ENCODE measurements at regions of chr1 and their contacts with region 1.

Region 1: GRCh38 chr1:201085916-201086735 is 26.1 kb downstream of the CACNA1S start:
- DNase-seq: peak; percentile 31
- H3K4me3 ChIP-seq: no peak overlapping the region
- H3K27ac ChIP-seq: no peak overlapping the region
- H3K4me1 ChIP-seq: no peaks in the 10 kb centered on the region
- H3K27me3 ChIP-seq: peaks cover 7% of the 10 kb centered on the region in 2 experiments
- CTCF ChIP-seq: peak; percentile 36 to 70
- POLR2A ChIP-seq: no peak

Region 2: GRCh38 chr1:201108614-201109013 is 22.5 kb after region 1 on chr1:
- CTCF ChIA-PET with region 1: interaction called, 54 read pairs
- POLR2A ChIA-PET with region 1: interaction called, 3 read pairs
- dilution Hi-C with region 1: no loop called
- intact Hi-C with region 1: no loop called
- DNase-seq: no peak
- H3K4me3 ChIP-seq: no peak overlapping the region
- H3K27ac ChIP-seq: no peak overlapping the region
- H3K4me1 ChIP-seq: no peaks in the 10 kb centered on the region
- H3K27me3 ChIP-seq: peaks cover 8 to 13% of the 10 kb centered on the region in 2 experiments
- CTCF ChIP-seq: no peak
- POLR2A ChIP-seq: no peak

Region 3: DNA sequence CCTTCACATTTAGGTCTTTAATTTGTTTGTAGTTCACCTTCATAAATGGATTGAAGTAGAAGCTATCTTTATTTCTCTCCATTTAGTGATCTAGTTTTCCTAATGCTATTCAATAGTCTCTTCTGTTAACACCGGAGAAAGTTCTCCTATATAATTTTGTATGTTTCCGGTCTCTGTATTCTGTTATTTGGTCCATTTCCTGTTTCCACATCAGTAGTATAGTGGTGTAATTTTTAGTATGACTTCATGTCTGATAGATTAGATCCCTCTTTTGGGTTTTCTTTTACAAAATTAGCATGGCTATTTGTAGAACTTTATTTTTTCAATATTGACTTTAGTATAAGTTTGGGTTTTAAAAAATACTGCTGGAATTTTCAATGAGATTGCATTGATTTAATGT is 155.6 kb after region 1 on chr1:
- CTCF ChIA-PET with region 1: no interaction called
- POLR2A ChIA-PET with region 1: no interaction called
- dilution Hi-C with region 1: no loop called
- intact Hi-C with region 1: no loop called
- DNase-seq: no peak
- H3K4me3 ChIP-seq: no peak overlapping the region
- H3K27ac ChIP-seq: no peak overlapping the region
- H3K4me1 ChIP-seq: peaks cover 3% of the 10 kb centered on the region
- H3K27me3 ChIP-seq: peaks cover 10 to 57% of the 10 kb centered on the region in 2 experiments
- CTCF ChIP-seq: no peak
- POLR2A ChIP-seq: no peak

Region 4: GRCh38 chr1:201320163-201320788 is 234.2 kb after region 1 on chr1:
- CTCF ChIA-PET with region 1: no interaction called
- POLR2A ChIA-PET with region 1: no interaction called
- dilution Hi-C with region 1: no loop called
- intact Hi-C with region 1: no loop called
- DNase-seq: no peak
- H3K4me3 ChIP-seq: no peak overlapping the region
- H3K27ac ChIP-seq: no peak overlapping the region
- H3K4me1 ChIP-seq: no peaks in the 10 kb centered on the region
- H3K27me3 ChIP-seq: no peaks in the 10 kb centered on the region
- CTCF ChIP-seq: no peak
- POLR2A ChIP-seq: no peak